Activated T-helper 1 cell treated with anti-CD3 and anti-CD28 coated beads, Interleukin-12 subunit alpha, Interleukin-12 subunit beta, Interleukin-2, Interleukin-4 antibody, amounts not matched to agents 30 ng/mL and 10 ng/mL and 1 ng/mL, durations not matched to agents 14 hours and 24 hours and 36 hours (primary cell): ENCODE measurements at regions of chr20 and their contacts with region 1.

Region 1: GRCh38 chr20:5608442-5609161 is 141.6 kb upstream of the SHLD1 start:
- DNase-seq: no peak
- H3K4me3 Mint-ChIP-seq: peak overlapping the region; percentile 99
- H3K27ac Mint-ChIP-seq: peak overlapping the region; percentile 57
- H3K4me1 Mint-ChIP-seq: peaks cover 53% of the 10 kb centered on the region
- H3K27me3 Mint-ChIP-seq: peaks cover 3% of the 10 kb centered on the region

Region 2: DNA sequence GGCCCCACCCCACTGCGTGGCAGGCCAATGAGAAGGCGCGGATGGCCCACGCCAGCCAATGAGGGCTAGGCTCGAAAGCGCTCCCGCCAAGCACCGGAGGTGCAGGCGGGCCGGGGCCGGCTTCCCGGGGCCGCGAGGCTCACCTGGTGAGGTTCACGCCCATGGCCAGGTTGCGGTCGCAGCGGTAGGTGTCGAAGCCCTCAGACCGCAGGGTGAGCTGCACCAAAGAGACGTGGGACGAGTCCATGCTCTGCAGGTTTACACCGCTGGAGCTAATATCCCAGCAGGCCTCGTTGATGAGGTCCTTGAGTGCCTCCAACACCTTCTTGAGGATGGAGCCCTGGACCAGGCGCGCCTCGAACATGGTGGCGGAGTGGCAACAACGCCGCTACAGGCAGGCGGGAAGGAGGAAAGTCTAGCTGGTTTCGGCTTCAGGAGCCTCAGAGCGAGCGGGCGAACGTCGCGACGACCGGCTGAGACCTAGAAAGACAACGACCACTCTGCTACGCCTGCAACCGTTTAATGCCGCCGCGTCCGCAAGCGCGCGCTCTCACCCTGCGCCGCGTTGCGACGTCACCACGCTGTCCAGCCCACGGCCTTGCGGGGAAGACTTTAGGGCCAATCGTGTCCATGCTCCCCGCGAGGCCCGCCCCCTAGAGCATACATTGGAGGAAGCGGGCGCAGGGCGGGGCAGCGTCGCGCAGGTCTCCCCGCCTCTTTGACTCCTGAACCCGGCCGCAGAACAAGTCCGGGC is 489.0 kb before region 1 on chr20 and contains the start of gene PCNA:
- intact Hi-C with region 1: loop called (anchors 5 kb)
- DNase-seq: peak; percentile 98
- H3K4me3 Mint-ChIP-seq: peak within 1 kb of the TSS; percentile 96
- H3K27ac Mint-ChIP-seq: peak within 1 kb of the TSS; percentile 97
- H3K4me1 Mint-ChIP-seq: peaks cover 62% of the 10 kb centered on the region
- H3K27me3 Mint-ChIP-seq: no peaks in the 10 kb centered on the region
- total RNA-seq, gene PCNA: 512 and 519 TPM in 2 replicates

Region 3: GRCh38 chr20:5480824-5481600 is 127.6 kb before region 1 on chr20:
- intact Hi-C with region 1: no loop called
- DNase-seq: no peak
- H3K4me3 Mint-ChIP-seq: no peak overlapping the region
- H3K27ac Mint-ChIP-seq: no peak overlapping the region
- H3K4me1 Mint-ChIP-seq: peaks cover 2% of the 10 kb centered on the region
- H3K27me3 Mint-ChIP-seq: no peaks in the 10 kb centered on the region

Region 4: DNA sequence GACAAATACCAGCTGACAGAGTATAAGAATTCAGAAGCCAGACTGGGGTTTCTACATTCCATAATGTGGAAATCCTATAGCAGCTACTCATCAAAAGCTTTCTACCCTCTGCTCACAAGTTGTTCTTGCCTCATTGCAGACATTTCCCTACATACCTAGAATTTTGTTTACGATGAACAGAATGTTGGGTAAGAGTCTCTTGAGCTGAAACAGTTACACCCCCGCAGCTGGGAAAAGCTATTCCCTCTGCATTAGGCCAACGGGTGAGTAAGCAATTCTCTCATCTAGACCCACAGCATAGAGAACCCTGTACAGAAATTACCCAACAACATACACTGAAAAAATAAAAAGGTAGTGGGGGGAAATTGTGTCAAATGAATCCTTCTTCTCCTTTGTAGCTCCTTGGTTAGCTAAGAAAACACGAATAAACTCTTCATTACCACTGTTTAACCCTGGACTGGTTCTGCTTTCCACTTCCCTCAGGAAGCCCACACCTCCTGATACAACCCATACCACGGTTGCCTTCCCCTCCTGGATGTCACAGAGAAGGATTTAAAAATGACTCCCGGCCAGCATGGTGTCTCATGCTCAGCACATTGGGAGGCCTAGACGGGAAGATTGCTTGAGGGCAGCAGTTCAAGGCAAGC is 73.4 kb before region 1 on chr20:
- intact Hi-C with region 1: no loop called
- DNase-seq: no peak
- H3K4me3 Mint-ChIP-seq: no peak overlapping the region
- H3K27ac Mint-ChIP-seq: no peak overlapping the region
- H3K4me1 Mint-ChIP-seq: peaks cover 18% of the 10 kb centered on the region
- H3K27me3 Mint-ChIP-seq: no peaks in the 10 kb centered on the region